ENCODE measurements at regions of chrX and their contacts with region 1.

Region 1: GRCh38 chrX:68571610-68572311 is 72.9 kb downstream of the YIPF6 start:
- DNase-seq: peak; percentile 34
- H3K4me3 Mint-ChIP-seq: no peak overlapping the region
- H3K27ac Mint-ChIP-seq: no peak overlapping the region
- H3K4me1 Mint-ChIP-seq: peaks cover 24% of the 10 kb centered on the region
- H3K27me3 Mint-ChIP-seq: no peaks in the 10 kb centered on the region

Region 2: GRCh38 chrX:68536429-68536828 is 35.3 kb before region 1 on chrX:
- CTCF ChIA-PET with region 1: no interaction called
- intact Hi-C with region 1: loop called (anchors 1 kb)
- DNase-seq: no peak
- H3K4me3 Mint-ChIP-seq: no peak overlapping the region
- H3K27ac Mint-ChIP-seq: no peak overlapping the region
- H3K4me1 Mint-ChIP-seq: peaks cover 9% of the 10 kb centered on the region
- H3K27me3 Mint-ChIP-seq: no peaks in the 10 kb centered on the region

Region 3: GRCh38 chrX:68693481-68694434 is 122.0 kb after region 1 on chrX:
- CTCF ChIA-PET with region 1: no interaction called
- intact Hi-C with region 1: loop called (anchors 10 kb)
- DNase-seq: no peak
- H3K4me3 Mint-ChIP-seq: no peak overlapping the region
- H3K27ac Mint-ChIP-seq: no peak overlapping the region
- H3K4me1 Mint-ChIP-seq: peaks cover 3% of the 10 kb centered on the region
- H3K27me3 Mint-ChIP-seq: peaks cover 20% of the 10 kb centered on the region